ENCODE measurements at regions of chr1 and their contacts with region 1.

Region 1: GRCh38 chr1:182084487-182085316 is 23.2 kb upstream of the ZNF648 start:
- DNase-seq: peak; percentile 26
- H3K4me3 ChIP-seq: no peak overlapping the region
- H3K27ac ChIP-seq: peak overlapping the region; percentile 40 to 61 (median 53)
- H3K4me1 ChIP-seq: peaks cover 14 to 48% (median 21%) of the 10 kb centered on the region in 3 donors
- H3K27me3 ChIP-seq: no peaks in the 10 kb centered on the region
- CTCF ChIP-seq: peak; percentile 63 to 98 (median 96)
- POLR2A ChIP-seq: no peak

Region 2: DNA sequence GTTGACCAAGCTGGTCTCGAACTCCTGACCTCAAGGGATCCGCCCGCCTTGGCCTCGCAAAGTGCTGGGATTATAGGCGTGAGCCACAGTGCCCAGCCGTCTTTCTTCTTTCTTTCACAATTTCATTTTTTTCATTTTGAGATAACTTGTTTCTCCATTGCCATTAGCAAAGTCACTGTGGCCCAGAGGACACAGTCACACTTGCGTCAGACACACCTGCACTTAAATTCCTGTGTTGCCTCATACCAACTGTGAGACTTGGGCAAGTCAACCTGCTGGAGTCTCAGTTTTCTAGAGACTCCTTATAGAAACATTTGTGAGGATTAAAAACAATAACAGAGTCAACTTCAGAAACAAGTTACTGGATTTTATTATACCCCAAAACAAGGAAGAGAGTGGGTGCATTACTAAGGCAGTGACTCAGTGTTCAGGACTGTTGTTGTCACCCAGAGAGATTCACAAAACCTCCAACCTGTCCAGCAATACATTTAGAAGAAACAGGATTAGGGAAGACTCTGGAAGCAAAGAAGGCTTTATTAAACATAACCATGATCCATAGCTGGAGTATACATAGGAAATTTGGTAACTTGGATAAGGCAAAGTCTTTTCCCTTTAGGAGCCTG is 313.2 kb after region 1 on chr1:
- intact Hi-C with region 1: loop called (anchors 5 kb)
- DNase-seq: no peak
- H3K4me3 ChIP-seq: no peak overlapping the region
- H3K27ac ChIP-seq: peak overlapping the region in 3 of 4 donors; percentile 78 to 87 (median 86)
- H3K4me1 ChIP-seq: peaks cover 4 to 47% (median 11%) of the 10 kb centered on the region in 3 donors
- H3K27me3 ChIP-seq: no peaks in the 10 kb centered on the region
- CTCF ChIP-seq: no peak
- POLR2A ChIP-seq: no peak

Region 3: DNA sequence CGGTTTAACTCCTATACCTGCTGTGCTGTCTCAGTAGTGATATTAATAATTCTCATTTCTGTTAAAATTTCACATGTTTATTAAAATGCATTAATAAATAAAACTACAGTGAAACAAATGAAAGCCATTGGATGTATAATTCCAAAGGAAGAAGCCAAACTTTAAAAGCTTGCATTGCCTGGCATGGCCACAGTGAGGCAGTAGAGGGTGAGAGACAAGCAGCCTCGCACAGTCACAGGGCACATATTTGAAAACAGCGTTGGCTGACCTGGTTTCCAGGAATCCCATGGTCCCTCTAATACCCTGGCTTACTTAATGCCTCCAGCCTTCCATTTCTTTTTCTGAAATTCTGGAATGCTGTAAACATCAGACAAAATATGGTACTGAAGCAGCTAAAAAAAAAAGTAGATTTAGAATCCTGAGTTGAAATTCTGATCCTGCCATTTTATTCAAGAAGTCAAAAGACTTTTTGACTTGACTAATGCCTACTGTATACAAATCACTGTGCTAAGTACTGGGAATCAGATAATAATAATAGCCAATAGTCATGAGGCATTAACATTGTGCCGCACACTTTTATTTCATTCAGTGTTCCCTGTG is 511.0 kb after region 1 on chr1:
- intact Hi-C with region 1: loop called (anchors 10 kb)
- DNase-seq: no peak
- H3K4me3 ChIP-seq: no peak overlapping the region
- H3K27ac ChIP-seq: peak overlapping the region in 1 of 4 donors; percentile 41
- H3K4me1 ChIP-seq: peaks cover 0 to 11% (median 0%) of the 10 kb centered on the region in 3 donors
- H3K27me3 ChIP-seq: no peaks in the 10 kb centered on the region
- CTCF ChIP-seq: peak; percentile 57 to 89 (median 83)
- POLR2A ChIP-seq: no peak

Region 4: GRCh38 chr1:182789138-182790076 is 704.7 kb after region 1 on chr1 and contains the start of gene NPL:
- intact Hi-C with region 1: loop called (anchors 10 kb)
- DNase-seq: peak; percentile 17
- H3K4me3 ChIP-seq: peak within 1 kb of the TSS; percentile 56 to 97 (median 64)
- H3K27ac ChIP-seq: peak within 1 kb of the TSS; percentile 80 to 89 (median 84)
- H3K4me1 ChIP-seq: peaks cover 3 to 40% (median 13%) of the 10 kb centered on the region in 3 donors
- H3K27me3 ChIP-seq: no peaks in the 10 kb centered on the region
- CTCF ChIP-seq: peak in 2 of 6 experiments; percentile 11 to 20
- POLR2A ChIP-seq: peak in 2 of 4 donors; percentile 90 to 92
- total RNA-seq, gene NPL: 7.8 to 16.2 (median 12.6) TPM